ENCODE measurements at regions of chr13 and their contacts with region 1.

Region 1: GRCh38 chr13:31909864-31910551 is 121.6 kb upstream of the FRY start:
- DNase-seq: peak; percentile 37
- ATAC-seq: peak; percentile 73
- H3K4me3 ChIP-seq: no peak overlapping the region
- H3K27ac ChIP-seq: no peak overlapping the region
- H3K4me1 ChIP-seq: no peaks in the 10 kb centered on the region
- H3K27me3 ChIP-seq: no peaks in the 10 kb centered on the region; a peak in 2 of 4 replicates
- CTCF ChIP-seq: peak; percentile 73 to 86 (median 84)
- EP300 ChIP-seq: peak in 1 of 2 experiments; percentile 39; a peak in 1 of 4 replicates
- POLR2A ChIP-seq: no peak
- RAD21 ChIP-seq: peak; percentile 91

Region 2: DNA sequence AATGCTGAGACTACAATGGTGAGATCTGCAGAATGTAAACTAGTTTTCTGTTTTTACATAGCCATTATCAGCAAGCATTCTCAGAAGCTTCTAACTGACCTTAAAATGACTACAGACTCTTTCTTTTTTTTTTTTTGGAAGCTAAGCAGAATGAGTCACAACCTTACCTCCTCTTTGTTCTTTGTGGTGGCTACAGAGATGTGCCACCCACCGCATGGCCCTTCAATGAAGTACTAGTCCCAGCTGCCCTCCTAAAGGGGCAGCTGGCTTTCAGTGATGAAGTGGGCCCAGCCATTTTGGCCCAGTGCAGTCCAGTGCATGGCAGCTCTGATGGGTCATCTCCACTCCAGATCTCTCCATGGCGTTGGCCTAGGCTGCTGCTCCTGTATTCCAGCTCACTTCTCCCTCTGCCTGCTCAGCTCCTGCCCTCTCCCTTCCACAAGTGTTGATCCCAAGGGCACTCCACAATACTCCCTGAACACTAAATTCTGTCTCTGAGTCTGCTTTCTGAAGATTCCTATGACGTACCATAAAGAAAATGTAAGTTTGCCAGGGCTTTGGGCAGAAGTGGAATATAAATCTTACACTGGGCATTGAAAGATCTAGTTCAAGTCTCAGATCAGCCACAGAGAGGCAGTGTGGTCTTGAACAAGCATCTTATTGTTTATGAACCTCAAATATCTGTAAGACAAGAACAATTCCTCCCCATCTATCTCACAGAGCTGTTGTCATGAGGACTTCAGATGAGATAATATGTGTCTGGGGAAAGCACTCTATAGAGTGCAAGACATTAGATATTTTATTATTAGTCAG is 85.1 kb before region 1 on chr13:
- CTCF ChIA-PET with region 1: interaction called, 3 read pairs
- POLR2A ChIA-PET with region 1: no interaction called
- RAD21 ChIA-PET with region 1: interaction called, 7 read pairs
- SMC1A ChIA-PET with region 1: interaction called, 11 read pairs
- in situ Hi-C with region 1: no loop called
- intact Hi-C with region 1: no loop called
- DNase-seq: peak; percentile 13
- ATAC-seq: peak; percentile 71
- H3K4me3 ChIP-seq: no peak overlapping the region
- H3K27ac ChIP-seq: no peak overlapping the region
- H3K4me1 ChIP-seq: no peaks in the 10 kb centered on the region
- H3K27me3 ChIP-seq: no peaks in the 10 kb centered on the region
- CTCF ChIP-seq: peak; percentile 16 to 58 (median 17); a peak in 4 of 6 replicates
- EP300 ChIP-seq: no peak
- POLR2A ChIP-seq: no peak
- RAD21 ChIP-seq: peak; percentile 41

Region 3: GRCh38 chr13:31939668-31940067 is 29.7 kb after region 1 on chr13:
- CTCF ChIA-PET with region 1: interaction called, 19 read pairs
- POLR2A ChIA-PET with region 1: no interaction called
- RAD21 ChIA-PET with region 1: interaction called, 26 read pairs
- SMC1A ChIA-PET with region 1: interaction called, 7 read pairs
- in situ Hi-C with region 1: no loop called
- intact Hi-C with region 1: no loop called
- DNase-seq: no peak
- ATAC-seq: no peak
- H3K4me3 ChIP-seq: no peak overlapping the region
- H3K27ac ChIP-seq: no peak overlapping the region
- H3K4me1 ChIP-seq: no peaks in the 10 kb centered on the region
- H3K27me3 ChIP-seq: no peaks in the 10 kb centered on the region
- CTCF ChIP-seq: no peak
- EP300 ChIP-seq: no peak
- POLR2A ChIP-seq: no peak
- RAD21 ChIP-seq: no peak

Region 4: DNA sequence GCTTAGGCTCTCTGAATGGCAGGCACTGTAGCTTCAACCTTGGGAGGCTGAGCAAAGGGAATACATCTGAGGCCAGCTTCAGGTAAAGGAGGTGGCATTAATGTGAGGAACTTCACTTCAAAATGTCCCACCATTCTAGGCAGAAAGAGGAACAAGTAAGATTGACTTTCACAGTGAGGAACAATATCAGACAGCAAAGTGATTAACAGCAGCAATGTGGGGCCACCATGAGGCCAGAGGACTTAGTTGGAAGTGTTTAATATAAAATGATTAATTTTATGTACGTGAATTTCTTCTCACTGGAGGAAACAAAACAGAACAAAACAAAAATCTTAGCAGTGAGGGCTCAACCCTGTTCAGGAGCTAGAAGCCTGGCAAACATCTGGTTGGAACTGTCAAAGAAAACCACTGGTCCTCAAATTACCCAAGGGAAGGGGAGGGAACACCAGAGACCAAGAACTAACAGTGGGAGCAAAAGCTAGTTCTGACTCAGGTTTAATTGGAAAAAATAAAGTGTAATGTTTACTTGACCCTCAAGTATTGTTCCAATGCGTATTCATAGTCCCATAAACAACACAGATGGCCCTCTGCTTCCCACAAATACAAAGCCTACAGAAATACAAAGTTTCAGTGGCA is 77.6 kb after region 1 on chr13:
- CTCF ChIA-PET with region 1: interaction called, 64 read pairs
- POLR2A ChIA-PET with region 1: interaction called, 5 read pairs
- RAD21 ChIA-PET with region 1: interaction called, 46 read pairs
- SMC1A ChIA-PET with region 1: interaction called, 46 read pairs
- in situ Hi-C with region 1: no loop called
- intact Hi-C with region 1: loop called (anchors 5 kb)
- DNase-seq: no peak
- ATAC-seq: peak; percentile 31; the same call in 1 of the 3 replicates
- H3K4me3 ChIP-seq: no peak overlapping the region
- H3K27ac ChIP-seq: no peak overlapping the region
- H3K4me1 ChIP-seq: no peaks in the 10 kb centered on the region
- H3K27me3 ChIP-seq: no peaks in the 10 kb centered on the region
- CTCF ChIP-seq: peak in 1 of 3 experiments; percentile 28; a peak in 2 of 6 replicates
- EP300 ChIP-seq: no peak
- POLR2A ChIP-seq: no peak
- RAD21 ChIP-seq: peak; percentile 70

Region 5: GRCh38 chr13:32041429-32041828 is 131.4 kb after region 1 on chr13:
- CTCF ChIA-PET with region 1: interaction called, 12 read pairs
- POLR2A ChIA-PET with region 1: no interaction called
- RAD21 ChIA-PET with region 1: interaction called, 4 read pairs
- SMC1A ChIA-PET with region 1: interaction called, 4 read pairs
- in situ Hi-C with region 1: no loop called
- intact Hi-C with region 1: no loop called
- DNase-seq: peak; percentile 49
- ATAC-seq: peak; percentile 91
- H3K4me3 ChIP-seq: no peak overlapping the region
- H3K27ac ChIP-seq: no peak overlapping the region; the same call in 1 of the 2 replicates
- H3K4me1 ChIP-seq: peaks cover 4% of the 10 kb centered on the region; the same call in 1 of the 2 replicates
- H3K27me3 ChIP-seq: no peaks in the 10 kb centered on the region
- CTCF ChIP-seq: no peak
- EP300 ChIP-seq: no peak
- POLR2A ChIP-seq: no peak
- RAD21 ChIP-seq: no peak

Region 6: DNA sequence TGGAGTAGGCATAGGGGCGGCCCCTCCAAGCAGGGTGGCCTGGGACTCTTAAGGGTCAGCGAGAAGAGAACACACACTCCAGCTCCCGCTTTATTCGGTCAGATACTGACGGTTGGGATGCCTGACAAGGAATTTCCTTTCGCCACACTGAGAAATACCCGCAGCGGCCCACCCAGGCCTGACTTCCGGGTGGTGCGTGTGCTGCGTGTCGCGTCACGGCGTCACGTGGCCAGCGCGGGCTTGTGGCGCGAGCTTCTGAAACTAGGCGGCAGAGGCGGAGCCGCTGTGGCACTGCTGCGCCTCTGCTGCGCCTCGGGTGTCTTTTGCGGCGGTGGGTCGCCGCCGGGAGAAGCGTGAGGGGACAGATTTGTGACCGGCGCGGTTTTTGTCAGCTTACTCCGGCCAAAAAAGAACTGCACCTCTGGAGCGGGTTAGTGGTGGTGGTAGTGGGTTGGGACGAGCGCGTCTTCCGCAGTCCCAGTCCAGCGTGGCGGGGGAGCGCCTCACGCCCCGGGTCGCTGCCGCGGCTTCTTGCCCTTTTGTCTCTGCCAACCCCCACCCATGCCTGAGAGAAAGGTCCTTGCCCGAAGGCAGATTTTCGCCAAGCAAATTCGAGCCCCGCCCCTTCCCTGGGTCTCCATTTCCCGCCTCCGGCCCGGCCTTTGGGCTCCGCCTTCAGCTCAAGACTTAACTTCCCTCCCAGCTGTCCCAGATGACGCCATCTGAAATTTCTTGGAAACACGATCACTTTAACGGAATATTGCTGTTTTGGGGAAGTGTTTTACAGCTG is 405.4 kb after region 1 on chr13 and contains the starts of genes BRCA2 and ZAR1L:
- CTCF ChIA-PET with region 1: interaction called, 23 read pairs
- POLR2A ChIA-PET with region 1: no interaction called
- RAD21 ChIA-PET with region 1: interaction called, 14 read pairs
- SMC1A ChIA-PET with region 1: interaction called, 14 read pairs
- in situ Hi-C with region 1: loop called (anchors 5 kb)
- intact Hi-C with region 1: loop called (anchors 1 kb)
- DNase-seq: peak; percentile 68
- ATAC-seq: peak; percentile 93
- H3K4me3 ChIP-seq: peak within 1 kb of the TSS; percentile 78
- H3K27ac ChIP-seq: peak within 1 kb of the TSS; percentile 97
- H3K4me1 ChIP-seq: peaks cover 20% of the 10 kb centered on the region
- H3K27me3 ChIP-seq: no peaks in the 10 kb centered on the region
- CTCF ChIP-seq: no peak
- EP300 ChIP-seq: no peak; a peak in 1 of 4 replicates
- POLR2A ChIP-seq: peak; percentile 91
- RAD21 ChIP-seq: no peak
- polyA plus RNA-seq, gene BRCA2: 7.6 to 15.8 TPM
- polyA plus RNA-seq, gene ZAR1L: not detected

Region 7: GRCh38 chr13:33289966-33290365 is 1380.0 kb after region 1 on chr13:
- CTCF ChIA-PET with region 1: no interaction called
- POLR2A ChIA-PET with region 1: no interaction called
- RAD21 ChIA-PET with region 1: no interaction called
- SMC1A ChIA-PET with region 1: no interaction called
- in situ Hi-C with region 1: no loop called
- intact Hi-C with region 1: no loop called
- DNase-seq: no peak
- ATAC-seq: no peak
- H3K4me3 ChIP-seq: no peak overlapping the region
- H3K27ac ChIP-seq: no peak overlapping the region
- H3K4me1 ChIP-seq: no peaks in the 10 kb centered on the region
- H3K27me3 ChIP-seq: no peaks in the 10 kb centered on the region; a peak in 1 of 4 replicates
- CTCF ChIP-seq: no peak
- EP300 ChIP-seq: no peak
- POLR2A ChIP-seq: no peak
- RAD21 ChIP-seq: no peak

Region 8: GRCh38 chr13:33367926-33368325 is 1457.9 kb after region 1 on chr13:
- CTCF ChIA-PET with region 1: no interaction called
- POLR2A ChIA-PET with region 1: no interaction called
- RAD21 ChIA-PET with region 1: no interaction called
- SMC1A ChIA-PET with region 1: no interaction called
- in situ Hi-C with region 1: no loop called
- intact Hi-C with region 1: no loop called
- DNase-seq: peak; percentile 23
- ATAC-seq: peak; percentile 82
- H3K4me3 ChIP-seq: no peak overlapping the region
- H3K27ac ChIP-seq: no peak overlapping the region
- H3K4me1 ChIP-seq: peaks cover 9% of the 10 kb centered on the region
- H3K27me3 ChIP-seq: no peaks in the 10 kb centered on the region
- CTCF ChIP-seq: no peak
- EP300 ChIP-seq: no peak
- POLR2A ChIP-seq: no peak
- RAD21 ChIP-seq: no peak

Measured in GM12878 (cell line).